ENCODE measurements at regions of chr18 and their contacts with region 1.

Region 1: GRCh38 chr18:59783138-59783537 is 85.9 kb upstream of the CCBE1 start:
- DNase-seq: peak; percentile 8 to 45
- H3K4me3 ChIP-seq: no peak overlapping the region
- H3K27ac ChIP-seq: no peak overlapping the region
- H3K4me1 ChIP-seq: peaks cover 38% of the 10 kb centered on the region
- H3K27me3 ChIP-seq: no peaks in the 10 kb centered on the region
- CTCF ChIP-seq: peak; percentile 64

Region 2: GRCh38 chr18:59502274-59503175 is 280.6 kb before region 1 on chr18:
- CTCF ChIA-PET with region 1: no interaction called
- POLR2A ChIA-PET with region 1: no interaction called
- intact Hi-C with region 1: no loop called
- DNase-seq: no peak
- H3K4me3 ChIP-seq: no peak overlapping the region
- H3K27ac ChIP-seq: no peak overlapping the region
- H3K4me1 ChIP-seq: no peaks in the 10 kb centered on the region
- H3K27me3 ChIP-seq: peaks cover 11% of the 10 kb centered on the region; the same call in 1 of the 2 replicates
- CTCF ChIP-seq: no peak

Region 3: DNA sequence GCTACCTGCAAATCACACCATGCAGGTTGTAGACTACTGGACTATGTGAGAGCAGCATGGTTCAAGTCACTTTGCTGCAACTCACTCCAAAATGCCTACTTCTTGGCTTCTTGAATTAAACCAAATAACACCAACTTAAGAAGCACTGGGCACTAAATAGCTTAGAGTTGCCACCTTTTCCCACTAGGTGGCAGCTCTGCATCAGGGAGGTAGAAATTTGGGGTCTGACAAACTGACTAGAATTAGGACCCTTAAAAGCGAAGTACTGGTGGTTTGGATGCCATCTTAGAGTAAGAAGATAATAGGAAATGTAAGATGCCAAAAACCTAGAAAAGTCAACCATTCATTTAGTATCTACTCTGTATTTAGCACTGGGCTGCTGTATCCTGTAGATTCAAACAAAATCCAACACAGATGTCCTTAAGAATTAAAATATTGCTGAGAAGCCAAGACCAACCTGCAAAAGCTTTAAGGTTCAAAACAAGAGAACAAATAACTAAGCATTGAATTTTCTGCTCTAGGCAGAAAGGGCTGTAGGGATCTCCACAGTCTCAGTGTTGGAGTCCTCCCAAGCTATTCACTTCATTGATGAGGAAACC is 151.5 kb before region 1 on chr18:
- CTCF ChIA-PET with region 1: interaction called, 3 read pairs
- POLR2A ChIA-PET with region 1: no interaction called
- intact Hi-C with region 1: loop called (anchors 10 kb)
- DNase-seq: no peak
- H3K4me3 ChIP-seq: no peak overlapping the region
- H3K27ac ChIP-seq: no peak overlapping the region
- H3K4me1 ChIP-seq: no peaks in the 10 kb centered on the region
- H3K27me3 ChIP-seq: no peaks in the 10 kb centered on the region
- CTCF ChIP-seq: peak; percentile 87

Region 4: DNA sequence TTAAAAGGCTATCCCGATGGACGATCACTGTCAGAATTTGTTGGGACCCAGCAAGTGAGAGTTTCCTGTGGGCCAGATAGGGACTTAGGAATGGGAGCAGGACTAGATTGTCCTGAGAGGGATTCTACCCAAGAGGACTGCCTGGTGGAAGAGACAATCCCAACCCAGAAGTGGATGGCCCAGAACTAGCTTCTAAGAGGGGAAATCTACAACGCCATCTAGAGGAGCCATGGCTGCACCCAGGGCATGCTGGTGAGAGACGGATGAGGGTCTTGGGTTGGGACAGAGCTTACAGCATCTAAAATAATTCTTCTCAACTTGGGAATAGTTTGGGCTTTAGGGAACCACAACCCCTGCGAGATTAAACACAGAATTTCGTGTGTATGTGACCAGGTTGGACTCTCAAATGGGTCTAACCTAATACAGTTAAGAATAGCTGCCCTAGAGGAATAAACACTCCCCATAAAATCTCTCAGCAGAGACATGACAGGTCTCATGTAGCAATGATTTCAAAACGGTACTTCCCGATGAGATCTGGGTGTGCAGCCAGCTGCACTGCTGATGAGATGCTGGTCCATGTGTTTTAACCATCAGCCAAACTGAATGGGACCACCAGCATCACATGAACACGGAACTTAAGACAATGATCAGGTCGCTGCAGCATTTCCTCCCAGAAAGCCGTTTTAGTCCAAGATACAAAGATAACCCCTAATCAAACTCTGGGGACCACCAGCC is 136.7 kb before region 1 on chr18:
- CTCF ChIA-PET with region 1: interaction called, 21 read pairs
- POLR2A ChIA-PET with region 1: no interaction called
- intact Hi-C with region 1: no loop called
- DNase-seq: no peak
- H3K4me3 ChIP-seq: no peak overlapping the region
- H3K27ac ChIP-seq: no peak overlapping the region
- H3K4me1 ChIP-seq: no peaks in the 10 kb centered on the region
- H3K27me3 ChIP-seq: no peaks in the 10 kb centered on the region
- CTCF ChIP-seq: no peak

Region 5: GRCh38 chr18:59718108-59718463 is 65.1 kb before region 1 on chr18:
- CTCF ChIA-PET with region 1: no interaction called
- POLR2A ChIA-PET with region 1: no interaction called
- intact Hi-C with region 1: loop called (anchors 1 kb)
- DNase-seq: peak; percentile 76 to 98
- H3K4me3 ChIP-seq: no peak overlapping the region
- H3K27ac ChIP-seq: peak overlapping the region; percentile 63
- H3K4me1 ChIP-seq: peaks cover 51% of the 10 kb centered on the region
- H3K27me3 ChIP-seq: no peaks in the 10 kb centered on the region
- CTCF ChIP-seq: no peak

Measured in PC-9 (cell line).